ENCODE measurements at regions of chr14 and their contacts with region 1.

Region 1: DNA sequence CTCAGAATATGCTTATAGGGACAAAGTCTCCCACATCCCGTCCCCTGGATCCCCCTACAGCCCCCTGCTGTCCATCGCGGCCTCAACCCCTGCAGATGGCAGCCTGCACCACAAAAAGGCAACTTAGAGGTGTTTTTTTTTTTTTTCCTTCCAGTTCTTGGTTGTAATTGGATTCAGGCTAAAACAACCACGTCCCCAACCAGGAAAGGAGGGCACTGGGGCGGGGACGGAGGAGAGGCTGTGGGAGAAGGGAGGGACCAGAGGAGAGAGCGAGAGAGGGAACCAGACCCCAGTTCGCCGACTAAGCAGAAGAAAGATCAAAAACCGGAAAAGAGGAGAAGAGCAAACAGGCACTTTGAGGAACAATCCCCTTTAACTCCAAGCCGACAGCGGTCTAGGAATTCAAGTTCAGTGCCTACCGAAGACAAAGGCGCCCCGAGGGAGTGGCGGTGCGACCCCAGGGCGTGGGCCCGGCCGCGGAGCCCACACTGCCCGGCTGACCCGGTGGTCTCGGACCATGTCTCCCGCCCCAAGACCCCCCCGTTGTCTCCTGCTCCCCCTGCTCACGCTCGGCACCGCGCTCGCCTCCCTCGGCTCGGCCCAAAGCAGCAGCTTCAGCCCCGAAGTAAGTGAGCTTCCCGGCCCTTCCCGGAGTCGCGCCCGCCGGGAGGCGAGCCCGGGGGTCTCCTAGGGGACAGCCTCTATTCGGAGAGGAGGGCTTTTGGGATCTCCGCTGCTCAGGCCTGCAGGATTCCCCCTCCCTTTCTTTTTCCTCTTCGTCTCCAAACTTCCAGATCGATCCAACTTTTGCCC is at the start of gene MMP14:
- DNase-seq: no peak
- H3K4me3 Mint-ChIP-seq: peak within 1 kb of the TSS; percentile 48
- H3K27ac Mint-ChIP-seq: no peak within 1 kb of the TSS
- H3K4me1 Mint-ChIP-seq: peaks cover 12% of the 10 kb centered on the region
- H3K27me3 Mint-ChIP-seq: peaks cover 18% of the 10 kb centered on the region
- total RNA-seq, gene MMP14: 1.1 to 1.4 TPM

Region 2: DNA sequence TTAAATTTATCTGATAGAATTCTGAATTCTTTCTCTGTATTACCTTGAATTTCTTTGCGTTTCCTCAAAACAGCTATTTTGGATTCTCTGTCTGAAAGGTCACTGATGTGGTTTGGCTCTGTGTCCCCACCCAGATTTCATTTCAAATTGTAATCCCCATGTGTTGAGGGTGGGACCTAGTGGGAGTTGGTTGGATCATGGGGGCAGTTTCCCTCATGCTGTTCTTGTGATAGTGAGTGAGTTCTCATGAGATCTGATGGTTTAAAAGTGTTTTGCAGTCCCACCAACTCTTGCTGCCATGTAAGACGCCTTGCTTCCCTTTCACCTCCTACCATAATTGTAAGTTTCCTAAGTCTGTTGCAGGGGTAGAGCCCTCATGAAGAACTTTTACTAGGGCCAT is 158.3 kb before region 1 on chr14:
- CTCF ChIA-PET with region 1: no interaction called
- POLR2A ChIA-PET with region 1: no interaction called
- intact Hi-C with region 1: no loop called
- DNase-seq: no peak
- H3K4me3 Mint-ChIP-seq: no peak overlapping the region
- H3K27ac Mint-ChIP-seq: no peak overlapping the region
- H3K4me1 Mint-ChIP-seq: no peaks in the 10 kb centered on the region
- H3K27me3 Mint-ChIP-seq: peaks cover 43% of the 10 kb centered on the region

Region 3: GRCh38 chr14:22822571-22823098 is 13.9 kb before region 1 on chr14:
- CTCF ChIA-PET with region 1: interaction called, 21 read pairs
- POLR2A ChIA-PET with region 1: interaction called, 3 read pairs
- intact Hi-C with region 1: no loop called
- DNase-seq: peak; percentile 77
- H3K4me3 Mint-ChIP-seq: peak overlapping the region; percentile 63
- H3K27ac Mint-ChIP-seq: no peak overlapping the region
- H3K4me1 Mint-ChIP-seq: peaks cover 26% of the 10 kb centered on the region
- H3K27me3 Mint-ChIP-seq: peaks cover 12% of the 10 kb centered on the region

Region 4: DNA sequence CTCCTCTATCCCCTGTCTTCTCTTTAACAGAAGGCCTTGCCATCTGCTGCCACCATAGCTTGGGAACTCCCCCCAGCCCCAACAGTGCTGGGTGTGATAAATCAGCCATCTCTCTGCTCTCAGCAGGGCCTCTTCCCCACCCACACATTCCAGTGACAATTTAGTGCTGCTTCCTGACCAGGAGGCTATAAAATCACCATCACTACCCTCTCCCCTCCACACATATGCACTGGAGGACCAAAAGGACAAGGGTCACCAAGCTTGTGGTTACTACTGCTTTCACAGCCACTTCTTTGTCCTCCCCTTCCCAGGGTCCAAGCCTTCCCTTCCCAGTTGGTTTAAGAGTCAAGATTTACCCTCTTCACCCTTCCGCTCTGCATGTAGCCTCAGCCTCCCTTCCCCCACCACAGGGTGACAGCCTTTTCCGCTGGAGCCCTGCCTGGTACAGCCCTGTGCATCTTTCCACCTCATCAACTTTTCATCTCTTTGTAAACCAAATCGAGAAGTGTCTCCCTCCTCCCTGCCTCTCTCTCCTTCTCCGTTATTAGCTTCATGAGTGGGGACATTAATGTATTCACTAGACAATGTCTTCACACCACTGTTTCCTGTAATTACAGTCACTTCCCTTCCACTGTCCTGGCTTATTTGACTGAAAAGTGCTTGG is 188.8 kb after region 1 on chr14:
- CTCF ChIA-PET with region 1: no interaction called
- POLR2A ChIA-PET with region 1: no interaction called
- intact Hi-C with region 1: no loop called
- DNase-seq: peak; percentile 53
- H3K4me3 Mint-ChIP-seq: peak overlapping the region; percentile 9
- H3K27ac Mint-ChIP-seq: peak overlapping the region; percentile 81
- H3K4me1 Mint-ChIP-seq: peaks cover 47% of the 10 kb centered on the region
- H3K27me3 Mint-ChIP-seq: no peaks in the 10 kb centered on the region

Measured in activated CD4-positive, alpha-beta memory T cell treated with anti-CD3 and anti-CD28 coated beads for 36 hours (primary cell).